ENCODE measurements at regions of chr3 and their contacts with region 1.

Region 1: DNA sequence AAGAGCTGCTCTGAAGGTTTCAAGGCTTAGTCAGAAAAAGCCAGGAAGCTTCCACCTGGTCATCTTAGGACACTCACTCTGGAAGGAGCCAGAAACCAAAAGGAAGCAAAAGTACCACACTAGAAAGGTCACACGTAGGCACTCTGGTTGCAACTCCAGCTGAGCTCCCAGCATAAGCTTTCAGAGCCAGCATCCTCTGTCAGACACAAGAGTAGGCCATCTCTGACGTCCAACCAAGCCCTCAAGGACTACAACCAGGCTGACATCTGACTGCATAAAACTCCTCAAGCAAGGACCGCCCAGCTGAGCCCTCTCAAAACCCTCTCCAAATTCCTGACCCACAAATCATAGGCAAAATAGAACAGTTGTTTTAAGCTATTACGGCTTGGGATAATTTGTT is 12.8 kb downstream of the SH3BP5 start:
- DNase-seq: no peak
- H3K4me3 ChIP-seq: no peak overlapping the region
- H3K4me3 Mint-ChIP-seq: peak overlapping the region; percentile 9 to 88 (median 38)
- H3K27ac ChIP-seq: peak overlapping the region; percentile 5
- H3K27ac Mint-ChIP-seq: peak overlapping the region in 4 of 7 donors; percentile 46 to 90 (median 86)
- H3K4me1 ChIP-seq: peaks cover 88% of the 10 kb centered on the region
- H3K4me1 Mint-ChIP-seq: peaks cover 63 to 96% (median 77%) of the 10 kb centered on the region in 4 donors
- H3K27me3 ChIP-seq: no peaks in the 10 kb centered on the region
- H3K27me3 Mint-ChIP-seq: no peaks in the 10 kb centered on the region

Region 2: GRCh38 chr3:15300323-15301078 is 19.1 kb before region 1 on chr3:
- CTCF ChIA-PET with region 1: interaction called, 4 read pairs
- POLR2A ChIA-PET with region 1: interaction called, 10 read pairs
- intact Hi-C with region 1: no loop called
- DNase-seq: no peak
- H3K4me3 ChIP-seq: peak overlapping the region in 1 of 2 donors; percentile 3
- H3K4me3 Mint-ChIP-seq: peak overlapping the region in 6 of 8 donors; percentile 51 to 78 (median 74)
- H3K27ac ChIP-seq: no peak overlapping the region
- H3K27ac Mint-ChIP-seq: peak overlapping the region; percentile 70 to 88 (median 77)
- H3K4me1 ChIP-seq: peaks cover 95% of the 10 kb centered on the region
- H3K4me1 Mint-ChIP-seq: peaks cover 60 to 97% (median 80%) of the 10 kb centered on the region in 4 donors
- H3K27me3 ChIP-seq: no peaks in the 10 kb centered on the region
- H3K27me3 Mint-ChIP-seq: no peaks in the 10 kb centered on the region